ENCODE measurements at regions of chr15 and their contacts with region 1.

Region 1: DNA sequence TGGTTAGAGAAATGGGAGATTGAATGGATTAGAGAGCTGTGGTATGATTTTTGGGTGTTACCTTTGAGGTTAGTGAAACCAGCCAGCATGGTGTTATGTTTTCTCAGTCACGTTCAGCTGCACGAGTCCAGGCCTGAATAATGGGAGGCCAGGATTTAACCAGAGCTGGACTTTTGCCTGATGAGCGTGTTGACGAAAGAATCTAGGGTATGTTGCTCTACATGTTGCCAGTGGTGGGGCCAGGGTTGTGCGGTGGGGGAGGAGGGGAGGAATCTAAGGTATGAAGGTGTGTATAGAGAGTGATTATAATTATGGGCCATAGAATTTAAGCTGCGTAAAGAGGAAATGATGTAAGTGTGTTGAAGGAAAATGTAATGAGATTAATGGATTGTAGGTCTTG is 22.8 kb downstream of the MINDY2 start:
- DNase-seq: no peak
- ATAC-seq: no peak
- H3K4me3 ChIP-seq: no peak overlapping the region
- H3K27ac ChIP-seq: no peak overlapping the region
- H3K4me1 ChIP-seq: peaks cover 2% of the 10 kb centered on the region; the same call in 1 of the 2 replicates
- H3K27me3 ChIP-seq: no peaks in the 10 kb centered on the region
- CTCF ChIP-seq: no peak
- POLR2A ChIP-seq: no peak
- RAD21 ChIP-seq: no peak

Region 2: GRCh38 chr15:58852347-58852746 is 58.5 kb after region 1 on chr15:
- CTCF ChIA-PET with region 1: no interaction called
- POLR2A ChIA-PET with region 1: no interaction called
- dilution Hi-C with region 1: no loop called
- in situ Hi-C with region 1: no loop called
- intact Hi-C with region 1: loop called (anchors 10 kb)
- DNase-seq: no peak
- ATAC-seq: no peak
- H3K4me3 ChIP-seq: no peak overlapping the region
- H3K27ac ChIP-seq: no peak overlapping the region
- H3K4me1 ChIP-seq: no peaks in the 10 kb centered on the region
- H3K27me3 ChIP-seq: no peaks in the 10 kb centered on the region
- CTCF ChIP-seq: no peak
- POLR2A ChIP-seq: no peak
- RAD21 ChIP-seq: no peak

Region 3: GRCh38 chr15:59104912-59105732 is 311.3 kb after region 1 on chr15 and contains the start of gene CCNB2:
- CTCF ChIA-PET with region 1: no interaction called
- POLR2A ChIA-PET with region 1: no interaction called
- dilution Hi-C with region 1: no loop called
- in situ Hi-C with region 1: no loop called
- intact Hi-C with region 1: no loop called
- DNase-seq: peak; percentile 94
- ATAC-seq: peak; percentile 99
- H3K4me3 ChIP-seq: peak within 1 kb of the TSS; percentile 77
- H3K27ac ChIP-seq: peak within 1 kb of the TSS; percentile 65
- H3K4me1 ChIP-seq: no peaks in the 10 kb centered on the region
- H3K27me3 ChIP-seq: no peaks in the 10 kb centered on the region
- CTCF ChIP-seq: no peak
- POLR2A ChIP-seq: peak; percentile 59; the same call in 1 of the 2 replicates
- RAD21 ChIP-seq: no peak
- total RNA-seq, gene CCNB2: 52.5 and 57.2 TPM in 2 replicates

Region 4: GRCh38 chr15:59116141-59116540 is 322.3 kb after region 1 on chr15:
- CTCF ChIA-PET with region 1: no interaction called
- POLR2A ChIA-PET with region 1: no interaction called
- dilution Hi-C with region 1: no loop called
- in situ Hi-C with region 1: no loop called
- intact Hi-C with region 1: no loop called
- DNase-seq: peak; percentile 35
- ATAC-seq: no peak
- H3K4me3 ChIP-seq: no peak overlapping the region
- H3K27ac ChIP-seq: no peak overlapping the region
- H3K4me1 ChIP-seq: no peaks in the 10 kb centered on the region
- H3K27me3 ChIP-seq: no peaks in the 10 kb centered on the region
- CTCF ChIP-seq: no peak
- POLR2A ChIP-seq: no peak
- RAD21 ChIP-seq: no peak

Measured in IMR-90 (cell line).